Activated CD4-positive, alpha-beta memory T cell treated with anti-CD3 and anti-CD28 coated beads for 36 hours (primary cell): ENCODE measurements at regions of chr1 and their contacts with region 1.

Region 1: DNA sequence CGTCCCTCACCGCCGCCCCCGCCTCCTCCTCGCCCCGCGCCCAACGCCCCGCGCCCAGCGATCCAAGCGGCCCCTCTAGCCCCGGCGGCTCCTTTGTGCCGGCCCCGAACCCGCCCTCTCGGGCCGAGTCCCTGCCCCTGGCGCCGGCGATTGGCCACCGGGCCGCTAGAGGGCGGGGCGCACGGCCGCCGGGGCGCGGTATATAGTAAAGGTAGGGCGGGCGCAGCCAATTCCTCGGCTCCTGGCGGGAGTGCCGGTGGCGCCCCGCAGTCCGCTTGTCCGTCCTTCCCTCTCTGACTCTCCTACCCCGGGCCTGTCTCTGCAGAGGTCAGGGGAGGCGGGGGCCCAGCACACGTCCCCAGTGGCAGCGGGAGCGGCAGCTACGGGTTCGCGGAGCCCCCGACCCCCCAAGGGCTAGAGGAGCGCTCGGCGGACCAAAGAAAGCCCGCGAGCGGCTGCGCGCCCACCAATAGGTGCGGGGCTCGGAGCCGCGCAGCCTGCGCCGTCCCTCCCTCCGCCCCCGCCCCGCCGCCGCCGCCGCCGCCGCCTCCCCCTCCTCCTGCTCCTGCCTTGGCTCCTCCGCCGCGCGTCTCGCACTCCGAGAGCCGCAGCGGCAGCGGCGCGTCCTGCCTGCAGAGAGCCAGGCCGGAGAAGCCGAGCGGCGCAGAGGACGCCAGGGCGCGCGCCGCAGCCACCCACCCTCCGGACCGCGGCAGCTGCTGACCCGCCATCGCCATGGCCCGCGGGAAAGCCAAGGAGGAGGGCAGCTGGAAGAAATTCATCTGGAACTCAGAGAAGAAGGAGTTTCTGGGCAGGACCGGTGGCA is at the start of gene ATP1B1:
- DNase-seq: peak; percentile 82
- H3K4me3 Mint-ChIP-seq: peak within 1 kb of the TSS; percentile 71
- H3K27ac Mint-ChIP-seq: peak within 1 kb of the TSS; percentile 79
- H3K4me1 Mint-ChIP-seq: peaks cover 36% of the 10 kb centered on the region
- H3K27me3 Mint-ChIP-seq: peaks cover 24% of the 10 kb centered on the region
- total RNA-seq, gene ATP1B1: 7.7 to 8.3 TPM

Region 2: GRCh38 chr1:168991667-168992475 is 114.4 kb before region 1 on chr1:
- CTCF ChIA-PET with region 1: no interaction called
- POLR2A ChIA-PET with region 1: no interaction called
- intact Hi-C with region 1: loop called (anchors 2 kb)
- DNase-seq: peak; percentile 43
- H3K4me3 Mint-ChIP-seq: no peak overlapping the region
- H3K27ac Mint-ChIP-seq: peak overlapping the region; percentile 81
- H3K4me1 Mint-ChIP-seq: peaks cover 20% of the 10 kb centered on the region
- H3K27me3 Mint-ChIP-seq: peaks cover 12% of the 10 kb centered on the region

Region 3: DNA sequence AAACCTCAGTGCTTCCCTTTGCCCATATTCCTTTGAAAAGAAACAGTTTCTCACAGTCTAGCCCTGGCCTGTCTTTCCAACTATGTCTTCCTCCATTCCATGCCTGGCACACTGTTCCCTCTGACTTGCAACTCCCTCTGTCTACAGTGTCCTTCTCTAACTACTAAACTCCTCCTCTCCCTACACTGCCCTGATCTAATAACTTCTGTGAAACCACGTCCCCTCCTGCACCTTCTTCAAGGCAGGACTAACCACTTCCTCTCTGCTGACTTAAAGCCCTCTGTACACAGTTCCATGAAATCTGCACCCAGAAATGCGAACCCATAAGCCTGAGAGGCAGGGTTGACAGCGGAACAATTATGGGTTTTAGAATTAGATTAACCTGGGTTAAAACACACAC is 62.0 kb before region 1 on chr1:
- CTCF ChIA-PET with region 1: no interaction called
- POLR2A ChIA-PET with region 1: no interaction called
- intact Hi-C with region 1: loop called (anchors 2 kb)
- DNase-seq: peak; percentile 57
- H3K4me3 Mint-ChIP-seq: no peak overlapping the region
- H3K27ac Mint-ChIP-seq: peak overlapping the region; percentile 35
- H3K4me1 Mint-ChIP-seq: peaks cover 53% of the 10 kb centered on the region
- H3K27me3 Mint-ChIP-seq: no peaks in the 10 kb centered on the region

Region 4: GRCh38 chr1:169138866-169139670 is 32.8 kb after region 1 on chr1:
- CTCF ChIA-PET with region 1: no interaction called
- POLR2A ChIA-PET with region 1: no interaction called
- intact Hi-C with region 1: loop called (anchors 2 kb)
- DNase-seq: no peak
- H3K4me3 Mint-ChIP-seq: no peak overlapping the region
- H3K27ac Mint-ChIP-seq: peak overlapping the region; percentile 14
- H3K4me1 Mint-ChIP-seq: peaks cover 4% of the 10 kb centered on the region
- H3K27me3 Mint-ChIP-seq: no peaks in the 10 kb centered on the region

Region 5: GRCh38 chr1:169161496-169162194 is 55.3 kb after region 1 on chr1:
- CTCF ChIA-PET with region 1: no interaction called
- POLR2A ChIA-PET with region 1: no interaction called
- intact Hi-C with region 1: loop called (anchors 5 kb)
- DNase-seq: no peak
- H3K4me3 Mint-ChIP-seq: no peak overlapping the region
- H3K27ac Mint-ChIP-seq: no peak overlapping the region
- H3K4me1 Mint-ChIP-seq: peaks cover 8% of the 10 kb centered on the region
- H3K27me3 Mint-ChIP-seq: no peaks in the 10 kb centered on the region

Region 6: GRCh38 chr1:169460191-169460833 is 354.0 kb after region 1 on chr1:
- CTCF ChIA-PET with region 1: no interaction called
- POLR2A ChIA-PET with region 1: no interaction called
- intact Hi-C with region 1: no loop called
- DNase-seq: peak; percentile 43
- H3K4me3 Mint-ChIP-seq: peak overlapping the region; percentile 43
- H3K27ac Mint-ChIP-seq: no peak overlapping the region
- H3K4me1 Mint-ChIP-seq: peaks cover 18% of the 10 kb centered on the region
- H3K27me3 Mint-ChIP-seq: peaks cover 16% of the 10 kb centered on the region

Region 7: GRCh38 chr1:169794530-169795416 is 688.5 kb after region 1 on chr1 and contains the start of gene METTL18:
- CTCF ChIA-PET with region 1: no interaction called
- POLR2A ChIA-PET with region 1: no interaction called
- intact Hi-C with region 1: loop called (anchors 10 kb)
- DNase-seq: peak; percentile 96
- H3K4me3 Mint-ChIP-seq: peak within 1 kb of the TSS; percentile 100
- H3K27ac Mint-ChIP-seq: peak within 1 kb of the TSS; percentile 99
- H3K4me1 Mint-ChIP-seq: peaks cover 44% of the 10 kb centered on the region
- H3K27me3 Mint-ChIP-seq: no peaks in the 10 kb centered on the region
- total RNA-seq, gene METTL18: 10.8 to 10.9 TPM